Activated B cell treated with CpG ODN at 0.5 μM for 24 hours (primary cell): ENCODE measurements at regions of chr11 and their contacts with region 1.

Region 1: DNA sequence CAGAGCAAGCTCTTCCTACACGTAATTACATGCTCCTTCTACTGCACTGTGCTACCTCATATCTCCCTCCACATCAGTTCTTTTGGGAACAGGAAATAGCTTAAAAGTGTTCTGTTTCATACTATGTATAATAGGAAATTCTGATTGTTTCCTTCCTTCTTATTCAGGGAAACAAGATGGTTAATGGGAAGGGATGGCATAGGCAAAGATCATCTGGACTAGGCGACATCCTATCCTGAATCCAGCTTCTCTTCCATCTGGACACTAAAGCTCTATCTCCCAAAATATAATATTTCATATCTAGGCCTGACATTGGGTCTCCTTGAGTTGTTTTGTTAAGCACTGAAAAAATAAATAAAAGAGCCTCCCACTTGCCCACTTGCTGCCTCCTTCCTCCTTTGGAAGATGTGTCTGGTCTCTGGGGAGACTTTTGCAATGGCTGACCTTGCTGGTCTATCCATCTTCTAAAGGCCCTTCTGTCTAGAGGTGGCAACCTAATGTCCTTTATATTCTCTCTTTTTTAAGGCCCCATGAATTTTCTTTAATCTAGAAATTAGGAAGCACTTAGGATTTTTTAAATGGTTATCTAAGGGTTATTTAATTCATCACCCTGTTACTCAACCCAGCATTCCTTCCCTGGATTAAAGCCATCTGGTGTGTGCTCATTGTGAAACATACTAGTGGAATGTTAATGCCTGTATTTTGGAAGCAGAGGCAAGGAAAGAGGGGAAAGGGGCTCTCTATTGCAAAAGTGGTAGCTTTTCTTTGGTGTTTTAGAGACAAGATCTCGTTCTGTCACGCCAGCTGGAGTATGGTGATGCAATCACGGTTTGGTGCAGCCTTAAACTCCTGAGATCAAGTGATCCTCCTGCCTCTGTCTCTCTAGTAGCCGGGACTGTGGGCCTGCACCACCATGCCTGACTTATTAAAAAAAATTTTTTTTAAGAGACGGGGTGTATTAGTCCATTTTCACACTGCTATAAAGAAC is 20.6 kb downstream of the CLMP start:
- DNase-seq: no peak
- ATAC-seq: no peak
- H3K4me3 Mint-ChIP-seq: no peak overlapping the region
- H3K27ac Mint-ChIP-seq: no peak overlapping the region
- H3K4me1 Mint-ChIP-seq: no peaks in the 10 kb centered on the region
- H3K27me3 Mint-ChIP-seq: no peaks in the 10 kb centered on the region
- CTCF ChIP-seq: no peak

Region 2: DNA sequence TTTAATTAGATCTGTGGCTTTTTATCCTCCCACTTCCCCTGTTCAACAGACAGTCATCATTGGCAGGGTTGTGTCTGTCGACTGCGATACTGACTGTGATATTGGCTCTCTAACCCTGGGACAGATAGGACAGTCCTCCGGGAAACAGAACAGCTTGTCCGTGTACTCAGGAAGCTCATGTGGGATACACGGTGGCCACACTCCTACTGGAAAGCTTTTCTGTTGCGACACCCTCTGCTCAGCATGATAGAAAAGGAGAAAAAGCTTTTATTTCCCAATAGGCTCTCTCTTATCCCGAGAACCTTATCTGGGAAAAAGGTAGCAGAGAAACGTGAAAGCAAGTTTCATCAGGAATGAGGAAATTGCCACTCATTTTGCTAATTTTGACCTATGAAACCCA is 52.1 kb before region 1 on chr11:
- CTCF ChIA-PET with region 1: no interaction called
- POLR2A ChIA-PET with region 1: no interaction called
- intact Hi-C with region 1: no loop called
- DNase-seq: no peak
- ATAC-seq: no peak
- H3K4me3 Mint-ChIP-seq: no peak overlapping the region
- H3K27ac Mint-ChIP-seq: no peak overlapping the region
- H3K4me1 Mint-ChIP-seq: no peaks in the 10 kb centered on the region
- H3K27me3 Mint-ChIP-seq: peaks cover 19% of the 10 kb centered on the region
- CTCF ChIP-seq: no peak

Region 3: DNA sequence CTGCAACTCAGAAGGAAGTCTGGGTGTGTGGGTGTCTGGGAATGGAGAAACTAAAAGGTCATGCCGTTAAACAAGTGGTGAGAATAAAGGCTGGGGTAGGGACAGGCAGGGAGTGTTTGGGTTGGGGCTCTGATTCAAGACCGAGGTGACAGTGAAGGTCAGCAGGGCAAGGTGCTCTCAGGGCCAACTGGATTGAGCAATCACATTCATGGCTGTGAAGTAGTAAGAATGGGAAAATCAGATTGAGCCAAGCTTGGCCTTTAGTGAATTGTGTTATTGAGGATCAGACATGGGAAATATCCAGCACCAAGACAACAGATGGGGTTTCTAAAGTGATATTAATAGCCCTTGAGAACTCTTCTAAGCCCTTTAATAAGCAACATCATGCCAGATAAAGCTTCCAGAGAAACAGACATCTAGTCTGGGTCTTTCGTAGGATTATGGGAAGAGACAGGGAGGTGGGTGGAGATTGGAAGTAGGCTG is 455.7 kb after region 1 on chr11:
- CTCF ChIA-PET with region 1: no interaction called
- POLR2A ChIA-PET with region 1: no interaction called
- intact Hi-C with region 1: loop called (anchors 5 kb)
- DNase-seq: no peak
- ATAC-seq: no peak
- H3K4me3 Mint-ChIP-seq: no peak overlapping the region
- H3K27ac Mint-ChIP-seq: no peak overlapping the region
- H3K4me1 Mint-ChIP-seq: no peaks in the 10 kb centered on the region
- H3K27me3 Mint-ChIP-seq: peaks cover 6% of the 10 kb centered on the region
- CTCF ChIP-seq: no peak